Motor neuron (in vitro differentiated cells): ENCODE measurements at regions of chr4 and their contacts with region 1.

Region 1: DNA sequence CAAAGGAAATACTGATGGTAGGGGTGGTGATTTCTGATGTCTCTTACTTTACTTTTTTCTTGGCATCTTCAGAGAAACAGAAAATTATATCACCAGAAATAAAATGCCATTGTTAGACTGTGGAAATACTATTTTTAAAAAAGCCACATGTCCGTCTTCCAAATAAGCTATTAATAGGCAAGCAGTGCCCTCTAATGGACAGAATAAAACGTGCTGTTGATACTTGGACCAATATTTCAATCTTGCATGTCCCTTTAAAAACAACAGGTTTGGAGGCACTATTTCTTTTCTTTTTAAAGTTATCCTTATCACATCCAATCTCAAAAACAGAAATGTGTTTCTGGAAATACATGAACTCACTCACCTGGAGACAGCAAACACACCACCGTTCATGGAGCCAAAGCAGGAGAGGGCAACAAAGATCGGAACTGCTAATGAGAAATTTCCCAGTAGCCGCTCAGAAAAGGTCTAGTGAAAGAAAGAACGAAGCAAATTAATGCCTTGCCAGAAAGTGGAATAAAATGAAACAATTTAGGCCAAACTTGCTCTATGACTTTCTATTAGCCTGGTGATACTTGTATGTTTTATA is 59.2 kb downstream of the SLC7A11 start:
- ATAC-seq: peak in 3 of 8 experiments; percentile 34 to 54 (median 49)
- H3K4me3 ChIP-seq: no peak overlapping the region
- H3K27ac ChIP-seq: no peak overlapping the region
- H3K4me1 ChIP-seq: peaks cover 26 to 42% of the 10 kb centered on the region in 2 donors

Region 2: DNA sequence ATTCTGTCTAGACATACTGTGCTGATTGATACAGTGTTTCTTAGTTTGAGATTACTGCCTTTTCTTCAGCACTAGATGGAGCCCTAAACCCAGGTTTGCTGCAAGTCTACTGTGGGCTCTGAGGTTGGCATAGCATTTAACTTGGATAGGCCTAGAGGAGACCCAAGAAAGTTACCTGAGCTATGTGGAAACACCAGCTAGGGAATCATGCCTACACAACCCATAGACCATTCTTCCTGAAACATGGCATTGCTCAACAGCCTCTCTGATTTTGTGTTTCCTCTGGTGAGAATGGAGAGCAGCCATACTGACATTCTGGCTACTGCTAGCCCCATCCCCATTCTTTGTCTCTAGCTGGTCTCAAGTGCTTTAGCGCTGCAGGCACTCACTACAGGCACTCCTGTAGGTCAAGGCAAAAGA is 363.0 kb before region 1 on chr4:
- in situ Hi-C with region 1: loop called in 1 of 9 experiments (anchors 25 kb)
- ATAC-seq: peak in 3 of 8 experiments; percentile 89 to 98 (median 95)
- H3K4me3 ChIP-seq: no peak overlapping the region
- H3K27ac ChIP-seq: no peak overlapping the region
- H3K4me1 ChIP-seq: no peaks in the 10 kb centered on the region

Region 3: GRCh38 chr4:138697851-138698250 is 514.9 kb after region 1 on chr4:
- in situ Hi-C with region 1: no loop called
- ATAC-seq: no peak
- H3K4me3 ChIP-seq: no peak overlapping the region
- H3K27ac ChIP-seq: no peak overlapping the region
- H3K4me1 ChIP-seq: peaks cover 8 to 24% of the 10 kb centered on the region in 2 donors

Region 4: DNA sequence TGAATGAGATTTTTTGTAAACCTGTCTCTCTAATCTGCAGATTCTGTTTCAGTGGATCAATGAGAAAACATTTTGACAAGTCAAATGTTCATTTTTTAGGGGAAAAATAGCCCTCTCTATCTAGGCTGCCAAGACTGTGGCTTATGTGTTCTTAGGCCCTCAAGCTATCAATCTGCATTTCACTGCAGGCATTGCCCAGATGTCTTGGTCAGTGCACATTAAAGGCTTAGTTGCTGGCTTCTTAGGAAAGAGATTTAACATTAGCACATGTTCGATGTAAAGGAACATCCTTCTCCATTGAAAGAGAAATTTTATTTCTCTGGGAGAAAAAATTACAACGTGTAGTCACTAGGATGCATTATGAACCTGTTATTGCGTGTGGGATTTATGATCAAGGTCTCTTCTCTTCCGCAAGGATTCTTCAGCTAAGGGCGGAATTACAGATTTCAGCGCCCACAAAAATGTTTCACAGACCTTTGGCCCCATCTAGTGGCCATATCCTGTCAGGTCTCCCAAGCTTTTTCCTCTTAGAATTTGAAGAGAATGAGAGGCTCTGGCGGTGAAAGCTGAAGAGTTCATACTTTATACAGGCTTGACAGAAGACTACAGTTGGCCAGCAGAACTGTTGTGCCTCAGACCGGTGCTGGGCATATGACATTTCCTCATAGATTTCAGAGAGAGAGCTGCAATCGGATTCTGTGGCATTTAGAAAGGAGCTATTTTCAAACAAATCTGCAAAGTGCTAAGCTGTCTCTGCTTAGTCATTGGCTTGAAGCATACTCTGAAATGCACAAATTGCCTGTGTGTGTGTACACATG is 688.0 kb after region 1 on chr4:
- in situ Hi-C with region 1: loop called in 1 of 9 experiments (anchors 25 kb)
- ATAC-seq: peak; percentile 61 to 92 (median 89)
- H3K4me3 ChIP-seq: no peak overlapping the region
- H3K27ac ChIP-seq: no peak overlapping the region
- H3K4me1 ChIP-seq: peaks cover 2 to 12% of the 10 kb centered on the region in 2 donors